ENCODE measurements at regions of chr15 and their contacts with region 1.

Region 1: GRCh38 chr15:72312605-72313447 is 7.1 kb downstream of the CELF6 start:
- DNase-seq: peak; percentile 36
- H3K4me3 ChIP-seq: no peak overlapping the region
- H3K27ac ChIP-seq: no peak overlapping the region
- H3K4me1 ChIP-seq: no peaks in the 10 kb centered on the region
- H3K27me3 ChIP-seq: no peaks in the 10 kb centered on the region
- CTCF ChIP-seq: peak; percentile 72 to 85

Region 2: DNA sequence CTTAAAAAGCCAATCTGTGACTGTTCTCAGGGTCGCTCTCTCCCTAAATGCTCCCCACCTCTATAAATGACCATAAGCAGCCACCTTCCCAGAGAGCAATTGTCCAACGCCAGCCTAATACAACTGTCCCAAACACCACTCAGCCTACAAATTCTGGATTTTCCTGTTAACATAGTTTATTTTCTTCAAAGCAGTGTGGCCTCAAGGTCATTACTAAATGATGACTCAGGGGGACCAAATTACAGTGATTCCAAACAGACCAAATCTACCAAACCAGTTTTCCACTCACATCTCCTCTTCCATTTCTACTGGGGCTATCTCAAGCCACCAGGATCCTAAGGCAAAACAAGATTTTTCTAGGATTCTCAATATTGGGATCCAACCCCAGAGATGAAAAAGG is 40.4 kb after region 1 on chr15:
- CTCF ChIA-PET with region 1: no interaction called
- dilution Hi-C with region 1: loop called (anchors 5 kb)
- in situ Hi-C with region 1: no loop called
- intact Hi-C with region 1: no loop called
- DNase-seq: peak; percentile 34
- H3K4me3 ChIP-seq: no peak overlapping the region
- H3K27ac ChIP-seq: no peak overlapping the region
- H3K4me1 ChIP-seq: peaks cover 8% of the 10 kb centered on the region
- H3K27me3 ChIP-seq: no peaks in the 10 kb centered on the region
- CTCF ChIP-seq: no peak

Region 3: DNA sequence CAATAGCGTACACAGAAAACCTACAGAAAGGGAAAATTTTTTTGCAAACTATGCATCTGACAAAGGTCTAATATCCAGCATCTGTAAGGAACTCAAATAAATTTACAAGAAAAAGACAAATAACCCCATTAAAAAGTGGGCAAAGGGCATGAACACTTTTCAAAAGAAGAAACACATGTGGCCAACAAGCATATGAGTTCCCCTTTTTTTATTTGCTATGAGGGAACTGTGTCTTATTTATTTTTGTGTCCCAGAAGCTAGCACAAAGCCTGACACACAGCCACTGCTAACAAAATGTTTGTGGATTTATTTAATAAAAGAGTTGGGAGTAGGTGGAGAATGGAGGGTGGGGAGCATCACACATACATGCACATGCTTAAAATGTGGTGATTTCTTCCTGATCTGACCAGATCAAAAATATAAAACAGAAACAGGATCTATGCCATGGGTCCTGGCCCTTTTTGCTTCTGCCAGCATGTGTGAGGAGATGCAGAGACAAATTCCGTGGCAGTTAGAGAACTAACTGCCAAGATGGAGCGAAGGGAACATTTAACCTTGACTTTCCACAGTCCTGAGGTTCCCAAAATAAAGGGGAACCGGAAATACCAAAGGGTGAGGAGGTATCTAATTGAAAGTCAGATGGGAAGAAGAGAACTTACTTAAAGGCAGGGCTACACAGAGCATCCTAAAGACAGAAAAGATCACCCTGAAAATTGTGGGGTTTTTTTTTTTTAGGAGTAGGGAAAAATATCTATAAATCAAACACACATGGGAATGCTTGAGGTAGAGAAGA is 85.2 kb after region 1 on chr15 and contains the start of gene TMEM202:
- CTCF ChIA-PET with region 1: no interaction called
- dilution Hi-C with region 1: no loop called
- in situ Hi-C with region 1: no loop called
- intact Hi-C with region 1: no loop called
- DNase-seq: no peak
- H3K4me3 ChIP-seq: no peak within 1 kb of the TSS
- H3K27ac ChIP-seq: no peak within 1 kb of the TSS
- H3K4me1 ChIP-seq: no peaks in the 10 kb centered on the region
- H3K27me3 ChIP-seq: peaks cover 3% of the 10 kb centered on the region
- CTCF ChIP-seq: no peak
- total RNA-seq, gene TMEM202: not detected

Region 4: GRCh38 chr15:72585476-72586082 is 272.8 kb after region 1 on chr15:
- CTCF ChIA-PET with region 1: no interaction called
- dilution Hi-C with region 1: no loop called
- in situ Hi-C with region 1: no loop called
- intact Hi-C with region 1: loop called (anchors 1 kb)
- DNase-seq: peak; percentile 8
- H3K4me3 ChIP-seq: no peak overlapping the region
- H3K27ac ChIP-seq: no peak overlapping the region
- H3K4me1 ChIP-seq: no peaks in the 10 kb centered on the region
- H3K27me3 ChIP-seq: no peaks in the 10 kb centered on the region
- CTCF ChIP-seq: peak; percentile 5 to 40

Region 5: DNA sequence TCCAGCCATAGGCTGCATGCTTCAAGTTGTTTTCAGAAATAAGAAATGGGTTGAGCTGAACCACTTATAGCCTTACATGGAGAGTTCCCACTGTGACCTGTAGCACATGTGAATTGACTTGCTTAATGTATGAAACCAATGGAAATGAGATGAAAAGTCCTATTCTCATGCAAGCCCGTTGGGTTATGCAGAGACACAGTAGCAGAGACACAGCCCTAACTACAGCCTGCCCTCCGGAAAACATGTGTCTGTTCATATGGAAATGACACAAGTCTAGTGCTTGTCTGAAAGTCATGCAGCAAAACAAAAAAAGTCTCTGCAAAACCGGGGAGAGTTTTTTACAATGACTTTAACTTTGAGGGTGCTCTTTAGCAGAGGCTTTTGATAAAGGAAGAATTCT is 358.7 kb after region 1 on chr15:
- CTCF ChIA-PET with region 1: no interaction called
- dilution Hi-C with region 1: no loop called
- in situ Hi-C with region 1: no loop called
- intact Hi-C with region 1: loop called (anchors 5 kb)
- DNase-seq: no peak
- H3K4me3 ChIP-seq: no peak overlapping the region
- H3K27ac ChIP-seq: no peak overlapping the region
- H3K4me1 ChIP-seq: peaks cover 3% of the 10 kb centered on the region
- H3K27me3 ChIP-seq: no peaks in the 10 kb centered on the region
- CTCF ChIP-seq: no peak

Measured in mammary epithelial cell (primary cell).